Common myeloid progenitor, CD34-positive (primary cell): ENCODE measurements at regions of chr14 and their contacts with region 1.

Region 1: GRCh38 chr14:20657216-20658128 is 16.0 kb upstream of the OR6S1 start:
- DNase-seq: peak in 2 of 3 donors; percentile 27 to 34
- H3K4me3 ChIP-seq: no peak overlapping the region
- H3K27ac ChIP-seq: no peak overlapping the region
- H3K4me1 ChIP-seq: peaks cover 0 to 10% (median 3%) of the 10 kb centered on the region in 4 experiments
- H3K27me3 ChIP-seq: peaks cover 12 to 70% (median 39%) of the 10 kb centered on the region in 5 experiments

Region 2: DNA sequence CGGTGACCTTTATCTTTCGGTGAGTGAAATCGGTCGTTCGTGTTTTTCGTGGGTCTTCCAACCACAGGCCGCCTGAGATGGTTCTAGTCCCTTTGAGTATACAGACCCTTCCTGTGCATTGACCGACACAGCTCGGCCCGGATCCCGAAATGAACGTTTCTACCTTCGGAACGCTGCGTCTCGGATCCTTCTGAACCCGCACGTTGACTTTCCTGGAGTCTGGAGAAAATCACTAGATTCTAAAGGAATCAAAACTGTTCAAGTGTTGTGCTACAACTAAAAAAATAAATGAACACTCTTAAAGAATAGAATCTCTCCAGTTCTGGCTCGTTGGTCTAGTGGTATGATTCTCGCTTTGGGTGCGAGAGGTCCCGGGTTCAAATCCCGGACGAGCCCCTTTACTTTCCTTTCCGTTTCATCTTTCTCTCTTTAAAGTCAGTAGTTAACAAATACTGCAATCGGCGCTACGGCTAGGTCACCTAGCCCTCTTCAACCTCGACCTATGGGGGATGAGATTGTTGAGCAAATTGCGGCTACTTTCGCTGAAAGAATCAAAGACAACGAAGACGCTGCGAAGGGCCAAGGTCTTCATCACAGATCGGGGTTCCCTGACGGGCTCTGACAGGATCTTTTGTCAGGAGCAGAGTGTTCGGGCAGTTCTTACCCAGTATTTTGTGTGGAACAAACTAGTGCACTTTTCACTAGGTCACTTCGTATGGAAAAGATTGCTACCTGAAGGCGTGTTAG is 24.6 kb before region 1 on chr14:
- CTCF ChIA-PET with region 1: interaction called, 12 read pairs
- POLR2A ChIA-PET with region 1: no interaction called
- DNase-seq: peak; percentile 73 to 89 (median 76)
- H3K4me3 ChIP-seq: peak overlapping the region; percentile 24 to 89 (median 76)
- H3K27ac ChIP-seq: no peak overlapping the region
- H3K4me1 ChIP-seq: peaks cover 10 to 33% (median 28%) of the 10 kb centered on the region in 4 experiments
- H3K27me3 ChIP-seq: peaks cover 9 to 51% (median 44%) of the 10 kb centered on the region in 5 experiments

Region 3: DNA sequence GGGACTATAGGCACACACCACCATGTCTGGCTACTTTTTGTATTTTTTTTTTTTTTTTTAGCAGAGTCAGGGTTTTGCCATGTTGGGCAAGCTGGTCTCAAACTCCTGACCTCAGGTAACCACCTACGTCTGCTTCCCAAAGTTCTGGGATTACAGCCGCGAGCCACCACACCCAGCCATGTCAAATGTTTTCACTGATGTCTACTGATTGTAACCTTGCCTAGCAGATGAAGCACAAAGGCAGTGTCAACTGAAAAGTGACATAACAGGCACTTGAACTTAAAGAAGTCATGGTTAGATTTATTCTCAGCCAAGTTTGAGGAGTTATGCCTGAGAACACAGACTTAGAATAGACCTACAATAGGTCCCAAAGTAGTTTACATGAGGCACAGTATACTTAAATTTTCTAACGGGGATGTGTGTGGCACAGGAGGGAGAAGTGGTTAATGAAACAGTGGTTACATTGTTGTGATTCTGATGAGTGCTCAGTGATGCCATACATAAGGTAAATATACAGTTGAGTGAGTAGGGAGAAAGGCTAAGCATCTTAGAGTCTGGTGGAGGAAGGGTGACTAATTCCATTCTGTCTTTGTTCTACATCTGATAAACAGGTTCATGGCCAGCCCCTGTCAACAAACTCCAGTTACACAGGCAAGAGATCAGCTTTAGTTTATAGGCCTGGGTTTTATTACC is 14.3 kb after region 1 on chr14:
- CTCF ChIA-PET with region 1: interaction called, 16 read pairs
- POLR2A ChIA-PET with region 1: no interaction called
- DNase-seq: no peak
- H3K4me3 ChIP-seq: no peak overlapping the region
- H3K27ac ChIP-seq: no peak overlapping the region
- H3K4me1 ChIP-seq: peaks cover 0 to 16% (median 5%) of the 10 kb centered on the region in 4 experiments
- H3K27me3 ChIP-seq: no peaks in the 10 kb centered on the region

Region 4: GRCh38 chr14:20682435-20683124 is 25.1 kb after region 1 on chr14:
- CTCF ChIA-PET with region 1: interaction called, 179 read pairs
- POLR2A ChIA-PET with region 1: no interaction called
- DNase-seq: peak; percentile 82 to 86 (median 82)
- H3K4me3 ChIP-seq: peak overlapping the region; percentile 72 to 99 (median 89)
- H3K27ac ChIP-seq: peak overlapping the region; percentile 27 to 84
- H3K4me1 ChIP-seq: peaks cover 24 to 50% (median 41%) of the 10 kb centered on the region in 4 experiments
- H3K27me3 ChIP-seq: no peaks in the 10 kb centered on the region